Testis (tissue), 5 donors: ENCODE measurements at regions of chr11 and their contacts with region 1.

Region 1: DNA sequence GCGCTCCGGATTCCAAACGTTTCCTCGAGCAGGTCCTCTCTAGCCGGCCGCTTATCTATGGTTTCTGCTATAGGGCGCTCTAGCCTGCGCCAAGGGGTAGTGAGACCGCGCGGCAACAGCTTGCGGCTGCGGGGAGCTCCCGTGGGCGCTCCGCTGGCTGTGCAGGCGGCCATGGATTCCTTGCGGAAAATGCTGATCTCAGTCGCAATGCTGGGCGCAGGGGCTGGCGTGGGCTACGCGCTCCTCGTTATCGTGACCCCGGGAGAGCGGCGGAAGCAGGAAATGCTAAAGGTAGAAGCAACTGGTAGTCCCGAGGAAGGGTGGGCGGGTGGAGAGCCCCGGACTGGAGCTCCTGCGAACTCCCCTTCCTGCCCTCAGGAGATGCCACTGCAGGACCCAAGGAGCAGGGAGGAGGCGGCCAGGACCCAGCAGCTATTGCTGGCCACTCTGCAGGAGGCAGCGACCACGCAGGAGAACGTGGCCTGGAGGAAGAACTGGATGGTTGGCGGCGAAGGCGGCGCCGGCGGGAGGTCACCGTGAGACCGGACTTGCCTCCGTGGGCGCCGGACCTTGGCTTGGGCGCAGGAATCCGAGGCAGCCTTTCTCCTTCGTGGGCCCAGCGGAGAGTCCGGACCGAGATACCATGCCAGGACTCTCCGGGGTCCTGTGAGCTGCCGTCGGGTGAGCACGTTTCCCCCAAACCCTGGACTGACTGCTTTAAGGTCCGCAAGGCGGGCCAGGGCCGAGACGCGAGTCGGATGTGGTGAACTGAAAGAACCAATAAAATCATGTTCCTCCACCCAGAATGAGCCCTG is at the starts of genes LBHD1 and UQCC3:
- DNase-seq: peak; percentile 93
- H3K4me3 ChIP-seq: peak within 1 kb of the TSS; percentile 75 to 76
- H3K27ac ChIP-seq: peak within 1 kb of the TSS; percentile 62 to 74
- H3K4me1 ChIP-seq: peaks cover 8% of the 10 kb centered on the region
- H3K27me3 ChIP-seq: no peaks in the 10 kb centered on the region
- CTCF ChIP-seq: peak in 1 of 3 experiments; percentile 24
- POLR2A ChIP-seq: no peak
- total RNA-seq, gene LBHD1: 8.2 to 11.6 TPM
- total RNA-seq, gene UQCC3: 8.0 to 8.1 TPM

Region 2: DNA sequence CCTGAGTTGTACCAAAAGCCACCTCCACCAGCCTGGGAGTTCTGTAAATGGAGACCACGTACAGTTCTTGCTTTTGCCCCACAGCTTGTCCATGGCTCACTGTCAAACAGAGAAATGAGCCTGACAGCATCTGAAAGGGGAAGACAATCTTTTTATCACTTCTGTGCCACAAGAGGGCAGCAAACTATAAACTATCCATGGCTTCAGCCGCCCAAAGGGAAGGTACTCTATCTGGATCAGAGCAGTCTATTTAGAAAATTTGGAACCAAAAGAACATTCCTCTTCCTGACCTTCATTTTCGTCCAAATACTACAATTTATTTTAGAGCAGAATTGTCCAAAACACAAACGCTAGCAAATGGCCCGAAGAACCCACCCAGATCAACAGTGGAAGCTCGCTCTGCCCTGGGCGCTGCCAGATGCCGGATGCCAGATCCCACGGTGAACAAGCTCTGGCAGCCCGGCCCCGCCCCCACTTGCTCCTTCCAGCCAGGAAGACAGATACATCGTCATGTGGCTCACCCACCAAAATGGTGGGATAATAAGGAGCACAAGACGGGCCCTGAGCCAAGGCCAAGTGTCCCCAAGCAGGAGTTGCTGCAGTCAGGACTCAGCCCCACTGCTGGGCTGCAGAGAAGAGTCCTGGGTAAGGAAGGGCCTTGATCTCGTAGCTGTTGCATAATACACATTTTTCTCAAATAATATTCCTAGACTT is 276.8 kb before region 1 on chr11:
- intact Hi-C with region 1: loop called (anchors 10 kb)
- DNase-seq: peak; percentile 85
- H3K4me3 ChIP-seq: no peak overlapping the region
- H3K27ac ChIP-seq: peak overlapping the region; percentile 21 to 67
- H3K4me1 ChIP-seq: peaks cover 44% of the 10 kb centered on the region
- H3K27me3 ChIP-seq: no peaks in the 10 kb centered on the region
- CTCF ChIP-seq: peak; percentile 74 to 80 (median 80)
- POLR2A ChIP-seq: no peak